GM12878 (cell line): ENCODE measurements at regions of chr7 and their contacts with region 1.

Region 1: GRCh38 chr7:140889645-140890044 is 35.1 kb downstream of the BRAF start:
- DNase-seq: no peak
- ATAC-seq: peak; percentile 22; the same call in 2 of the 3 replicates
- H3K4me3 ChIP-seq: no peak overlapping the region
- H3K27ac ChIP-seq: no peak overlapping the region
- H3K4me1 ChIP-seq: peaks cover 14% of the 10 kb centered on the region
- H3K27me3 ChIP-seq: no peaks in the 10 kb centered on the region
- CTCF ChIP-seq: no peak
- EP300 ChIP-seq: no peak
- POLR2A ChIP-seq: no peak
- RAD21 ChIP-seq: no peak

Region 2: DNA sequence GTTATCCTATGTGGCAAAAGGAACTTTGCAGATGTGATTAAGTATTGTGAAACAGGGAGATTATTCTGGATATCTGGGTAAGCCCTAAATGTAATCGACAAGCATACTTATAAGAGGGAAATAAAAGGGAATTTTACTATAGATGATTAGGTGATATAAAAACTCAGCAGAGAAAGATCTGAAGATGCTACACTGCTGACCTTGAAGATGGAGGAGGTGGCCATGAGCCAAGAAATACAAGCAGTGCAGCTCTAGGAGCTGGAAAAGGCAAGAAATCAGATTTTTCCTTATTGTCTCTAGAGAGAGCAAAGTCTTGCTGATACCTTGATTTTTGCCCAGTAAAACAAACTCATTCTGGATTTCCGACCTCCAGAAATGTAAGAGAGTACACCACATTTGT is 32.6 kb before region 1 on chr7:
- CTCF ChIA-PET with region 1: no interaction called
- POLR2A ChIA-PET with region 1: no interaction called
- RAD21 ChIA-PET with region 1: no interaction called
- SMC1A ChIA-PET with region 1: no interaction called
- in situ Hi-C with region 1: no loop called
- intact Hi-C with region 1: no loop called
- DNase-seq: no peak
- ATAC-seq: no peak
- H3K4me3 ChIP-seq: no peak overlapping the region
- H3K27ac ChIP-seq: no peak overlapping the region
- H3K4me1 ChIP-seq: no peaks in the 10 kb centered on the region
- H3K27me3 ChIP-seq: no peaks in the 10 kb centered on the region
- CTCF ChIP-seq: no peak
- EP300 ChIP-seq: no peak
- POLR2A ChIP-seq: no peak
- RAD21 ChIP-seq: no peak

Region 3: DNA sequence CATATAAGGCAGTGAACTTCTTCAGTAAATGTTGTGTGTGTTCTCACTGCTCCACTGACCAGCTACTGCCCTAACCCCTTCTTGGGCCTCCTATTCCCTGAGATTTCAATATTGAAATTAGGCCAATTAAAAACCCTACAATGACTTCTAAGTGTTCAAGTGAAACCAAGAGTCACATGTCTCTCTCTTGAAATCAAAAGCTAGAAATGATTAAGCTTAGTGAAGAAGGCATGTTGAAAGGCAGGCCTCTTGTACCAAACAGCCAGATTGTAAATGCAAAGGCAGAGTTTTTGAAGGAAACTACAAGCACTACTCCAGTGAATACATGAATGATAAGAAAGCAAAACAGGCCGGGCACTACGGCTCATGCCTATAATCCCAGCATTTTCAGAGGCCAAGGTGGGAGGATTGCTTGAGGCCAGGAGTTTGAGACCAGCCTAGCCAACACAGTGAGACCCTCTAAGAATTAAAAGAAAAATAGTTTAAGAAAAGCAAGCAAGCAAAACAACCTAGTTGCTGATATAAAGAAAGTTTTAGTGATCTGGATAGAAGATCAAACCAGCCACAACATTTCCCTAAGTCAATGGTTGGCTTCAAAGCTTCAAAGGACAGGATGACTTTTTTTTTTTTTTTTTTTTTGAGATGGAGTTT is 12.8 kb after region 1 on chr7:
- CTCF ChIA-PET with region 1: interaction called, 5 read pairs
- POLR2A ChIA-PET with region 1: no interaction called
- RAD21 ChIA-PET with region 1: interaction called, 3 read pairs
- SMC1A ChIA-PET with region 1: interaction called, 15 read pairs
- in situ Hi-C with region 1: no loop called
- intact Hi-C with region 1: no loop called
- DNase-seq: peak; percentile 48
- ATAC-seq: peak; percentile 79
- H3K4me3 ChIP-seq: 0 out of 2 replicates have a peak overlapping the region, but pooled peaks have one; percentile 24
- H3K27ac ChIP-seq: peak overlapping the region; percentile 52; the same call in 1 of the 2 replicates
- H3K4me1 ChIP-seq: peaks cover 8% of the 10 kb centered on the region; the same call in 1 of the 2 replicates
- H3K27me3 ChIP-seq: no peaks in the 10 kb centered on the region
- CTCF ChIP-seq: no peak
- EP300 ChIP-seq: peak; percentile 44 to 51; a peak in 1 of 4 replicates
- POLR2A ChIP-seq: no peak
- RAD21 ChIP-seq: no peak